WTC11 (cell line): ENCODE measurements at regions of chr20 and their contacts with region 1.

Region 1: GRCh38 chr20:35619196-35620095 is 3.8 kb downstream of the SPAG4 start:
- DNase-seq: peak; percentile 96
- ATAC-seq: peak; percentile 72
- H3K4me3 Mint-ChIP-seq: peak overlapping the region; percentile 89
- H3K27ac Mint-ChIP-seq: peak overlapping the region; percentile 86; the same call in 1 of the 2 replicates
- H3K4me1 Mint-ChIP-seq: peaks cover 15% of the 10 kb centered on the region
- H3K27me3 Mint-ChIP-seq: peaks cover 18% of the 10 kb centered on the region
- CTCF ChIP-seq: no peak; the same call in 1 of the 2 replicates

Region 2: GRCh38 chr20:35468673-35469334 is 150.6 kb before region 1 on chr20:
- CTCF ChIA-PET with region 1: no interaction called
- POLR2A ChIA-PET with region 1: no interaction called
- DNase-seq: no peak
- ATAC-seq: no peak
- H3K4me3 Mint-ChIP-seq: no peak overlapping the region
- H3K27ac Mint-ChIP-seq: no peak overlapping the region
- H3K4me1 Mint-ChIP-seq: 0 out of 2 replicates have a peak, but pooled peaks cover 3% of the 10 kb centered on the region
- H3K27me3 Mint-ChIP-seq: no peaks in the 10 kb centered on the region
- CTCF ChIP-seq: no peak

Region 3: GRCh38 chr20:35511814-35512420 is 107.5 kb before region 1 on chr20:
- CTCF ChIA-PET with region 1: interaction called, 10 read pairs
- POLR2A ChIA-PET with region 1: no interaction called
- DNase-seq: peak; percentile 29
- ATAC-seq: peak; percentile 26; the same call in 1 of the 2 replicates
- H3K4me3 Mint-ChIP-seq: no peak overlapping the region
- H3K27ac Mint-ChIP-seq: peak overlapping the region; percentile 18; the same call in 1 of the 2 replicates
- H3K4me1 Mint-ChIP-seq: no peaks in the 10 kb centered on the region
- H3K27me3 Mint-ChIP-seq: no peaks in the 10 kb centered on the region
- CTCF ChIP-seq: peak; percentile 26; the same call in 1 of the 2 replicates

Region 4: GRCh38 chr20:35568645-35569262 is 50.7 kb before region 1 on chr20:
- CTCF ChIA-PET with region 1: interaction called, 10 read pairs
- POLR2A ChIA-PET with region 1: interaction called, 3 read pairs
- DNase-seq: peak; percentile 44
- ATAC-seq: peak; percentile 95
- H3K4me3 Mint-ChIP-seq: no peak overlapping the region
- H3K27ac Mint-ChIP-seq: no peak overlapping the region; the same call in 1 of the 2 replicates
- H3K4me1 Mint-ChIP-seq: no peaks in the 10 kb centered on the region
- H3K27me3 Mint-ChIP-seq: peaks cover 8% of the 10 kb centered on the region
- CTCF ChIP-seq: no peak

Region 5: GRCh38 chr20:35607003-35607750 is 12.3 kb before region 1 on chr20:
- CTCF ChIA-PET with region 1: interaction called, 35 read pairs
- POLR2A ChIA-PET with region 1: interaction called, 10 read pairs
- DNase-seq: no peak
- ATAC-seq: no peak
- H3K4me3 Mint-ChIP-seq: no peak overlapping the region
- H3K27ac Mint-ChIP-seq: no peak overlapping the region
- H3K4me1 Mint-ChIP-seq: peaks cover 4% of the 10 kb centered on the region; the same call in 1 of the 2 replicates
- H3K27me3 Mint-ChIP-seq: peaks cover 30% of the 10 kb centered on the region
- CTCF ChIP-seq: no peak

Region 6: GRCh38 chr20:35664544-35665221 is 45.2 kb after region 1 on chr20 and contains the starts of genes CPNE1 and RBM12:
- CTCF ChIA-PET with region 1: interaction called, 12 read pairs
- POLR2A ChIA-PET with region 1: interaction called, 16 read pairs
- DNase-seq: peak; percentile 95
- ATAC-seq: peak; percentile 89
- H3K4me3 Mint-ChIP-seq: peak within 1 kb of the TSS; percentile 96
- H3K27ac Mint-ChIP-seq: peak within 1 kb of the TSS; percentile 100
- H3K4me1 Mint-ChIP-seq: peaks cover 41% of the 10 kb centered on the region
- H3K27me3 Mint-ChIP-seq: no peaks in the 10 kb centered on the region
- CTCF ChIP-seq: no peak
- total RNA-seq, gene CPNE1: 287 to 312 TPM (median 299 TPM) in 3 replicates
- total RNA-seq, gene RBM12: 125 to 163 TPM (median 160 TPM) in 3 replicates